ENCODE measurements at regions of chr1 and their contacts with region 1.

Region 1: DNA sequence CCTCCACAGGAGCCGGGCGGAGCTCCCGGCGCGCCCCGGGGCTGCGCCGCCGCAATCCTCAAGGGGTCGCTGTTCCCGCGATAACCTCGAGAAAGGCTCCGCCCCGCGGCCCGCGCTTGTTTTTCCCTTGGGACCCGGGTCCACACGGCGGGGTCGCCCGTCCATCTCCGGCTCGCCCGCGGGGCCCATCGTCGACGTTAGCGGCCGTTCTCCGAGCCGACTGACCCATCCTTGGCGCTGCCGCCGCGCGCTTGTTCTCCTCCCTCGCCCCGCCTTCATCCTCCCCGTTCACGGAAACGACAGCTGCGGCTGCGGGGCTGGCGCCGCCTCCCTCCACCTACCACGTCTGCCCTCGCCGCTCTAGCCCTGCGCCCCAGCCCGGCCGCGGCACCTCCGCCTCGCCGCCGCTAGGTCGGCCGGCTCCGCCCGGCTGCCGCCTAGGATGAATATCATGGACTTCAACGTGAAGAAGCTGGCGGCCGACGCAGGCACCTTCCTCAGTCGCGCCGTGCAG is at the start of gene SH3GLB1:
- H3K4me3 Mint-ChIP-seq: peak within 1 kb of the TSS; percentile 88
- H3K27ac Mint-ChIP-seq: peak within 1 kb of the TSS; percentile 98
- H3K4me1 Mint-ChIP-seq: peaks cover 22% of the 10 kb centered on the region
- H3K27me3 Mint-ChIP-seq: peaks cover 3% of the 10 kb centered on the region

Region 2: DNA sequence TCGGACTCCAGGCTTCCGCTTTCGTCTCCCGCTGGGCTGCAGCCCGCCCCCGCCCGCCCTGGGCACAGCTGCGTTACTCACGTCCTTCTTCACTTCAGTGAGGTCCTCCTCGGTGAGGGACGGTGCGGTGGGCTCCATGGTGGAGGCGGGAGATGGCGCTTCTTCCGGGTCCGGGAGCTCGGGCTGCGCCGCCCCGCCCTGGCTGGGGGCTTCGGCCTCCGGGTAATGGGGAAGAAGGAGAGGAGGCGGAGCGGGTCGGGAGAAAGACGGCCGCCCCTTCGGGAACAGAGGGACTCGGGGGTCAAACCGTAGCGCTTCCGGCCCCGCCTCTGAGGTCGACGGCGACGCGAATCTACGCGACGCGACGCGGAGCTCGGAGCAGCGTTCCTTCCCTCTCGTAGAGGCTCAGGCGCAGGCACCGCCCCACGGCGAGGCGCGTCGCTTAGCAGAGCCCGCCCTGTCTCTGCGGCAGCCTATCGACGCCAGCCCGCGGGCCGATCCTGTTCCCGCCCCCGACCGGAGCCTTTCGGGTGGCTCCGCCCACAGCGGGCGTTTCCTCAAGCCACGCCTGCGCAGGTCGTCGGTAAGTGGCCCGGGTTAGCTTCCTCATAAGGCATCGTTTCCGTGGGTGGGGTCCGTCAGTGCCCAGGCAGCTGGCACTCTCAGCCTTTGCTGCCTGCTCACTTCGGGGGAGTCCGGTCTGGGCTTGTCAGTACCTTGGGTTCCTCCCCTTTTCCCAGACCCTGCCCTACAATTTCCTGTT is 1428.1 kb before region 1 on chr1 and contains the start of gene BCL10:
- intact Hi-C with region 1: loop called (anchors 10 kb)
- H3K4me3 Mint-ChIP-seq: peak within 1 kb of the TSS; percentile 97
- H3K27ac Mint-ChIP-seq: peak within 1 kb of the TSS; percentile 99
- H3K4me1 Mint-ChIP-seq: peaks cover 56% of the 10 kb centered on the region
- H3K27me3 Mint-ChIP-seq: peaks cover 5% of the 10 kb centered on the region

Region 3: GRCh38 chr1:86389307-86389706 is 315.2 kb before region 1 on chr1:
- intact Hi-C with region 1: loop called (anchors 5 kb)
- H3K4me3 Mint-ChIP-seq: no peak overlapping the region
- H3K27ac Mint-ChIP-seq: peak overlapping the region; percentile 18
- H3K4me1 Mint-ChIP-seq: peaks cover 9% of the 10 kb centered on the region
- H3K27me3 Mint-ChIP-seq: no peaks in the 10 kb centered on the region

Region 4: GRCh38 chr1:86499987-86500593 is 204.4 kb before region 1 on chr1:
- intact Hi-C with region 1: loop called (anchors 5 kb)
- H3K4me3 Mint-ChIP-seq: no peak overlapping the region
- H3K27ac Mint-ChIP-seq: no peak overlapping the region
- H3K4me1 Mint-ChIP-seq: peaks cover 16% of the 10 kb centered on the region
- H3K27me3 Mint-ChIP-seq: peaks cover 2% of the 10 kb centered on the region

Region 5: DNA sequence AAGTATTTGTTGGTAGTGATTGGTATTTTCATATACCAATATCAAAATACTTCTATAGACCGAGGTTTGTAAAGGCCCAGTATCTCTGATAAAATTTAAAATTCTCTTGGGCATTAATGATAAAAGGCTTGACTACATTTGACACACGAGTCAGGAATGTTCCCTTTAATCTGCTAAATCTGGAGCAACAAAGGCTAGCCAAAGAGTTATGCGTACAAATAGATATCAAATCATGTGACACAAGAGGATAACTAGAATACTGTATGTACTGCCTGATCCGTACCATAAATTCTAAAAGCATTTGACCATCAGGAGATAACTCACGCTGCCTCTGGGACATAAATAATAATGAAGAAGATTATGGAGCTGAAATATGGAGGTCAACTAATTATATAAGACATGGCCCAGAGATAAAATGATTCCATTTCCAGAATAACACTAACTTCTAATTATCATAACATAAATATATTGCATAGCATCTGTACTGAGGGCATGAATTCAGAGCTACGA is 64.3 kb before region 1 on chr1:
- intact Hi-C with region 1: no loop called
- H3K4me3 Mint-ChIP-seq: no peak overlapping the region
- H3K27ac Mint-ChIP-seq: no peak overlapping the region
- H3K4me1 Mint-ChIP-seq: no peaks in the 10 kb centered on the region
- H3K27me3 Mint-ChIP-seq: no peaks in the 10 kb centered on the region

Measured in dendritic cell treated with granulocyte-macrophage colony-stimulating factor and Interleukin-4, amounts not matched to agents 40 ng/mL and 50 ng/mL, for 4 days (primary cell).